ENCODE measurements at regions of chr9 and their contacts with region 1.

Region 1: DNA sequence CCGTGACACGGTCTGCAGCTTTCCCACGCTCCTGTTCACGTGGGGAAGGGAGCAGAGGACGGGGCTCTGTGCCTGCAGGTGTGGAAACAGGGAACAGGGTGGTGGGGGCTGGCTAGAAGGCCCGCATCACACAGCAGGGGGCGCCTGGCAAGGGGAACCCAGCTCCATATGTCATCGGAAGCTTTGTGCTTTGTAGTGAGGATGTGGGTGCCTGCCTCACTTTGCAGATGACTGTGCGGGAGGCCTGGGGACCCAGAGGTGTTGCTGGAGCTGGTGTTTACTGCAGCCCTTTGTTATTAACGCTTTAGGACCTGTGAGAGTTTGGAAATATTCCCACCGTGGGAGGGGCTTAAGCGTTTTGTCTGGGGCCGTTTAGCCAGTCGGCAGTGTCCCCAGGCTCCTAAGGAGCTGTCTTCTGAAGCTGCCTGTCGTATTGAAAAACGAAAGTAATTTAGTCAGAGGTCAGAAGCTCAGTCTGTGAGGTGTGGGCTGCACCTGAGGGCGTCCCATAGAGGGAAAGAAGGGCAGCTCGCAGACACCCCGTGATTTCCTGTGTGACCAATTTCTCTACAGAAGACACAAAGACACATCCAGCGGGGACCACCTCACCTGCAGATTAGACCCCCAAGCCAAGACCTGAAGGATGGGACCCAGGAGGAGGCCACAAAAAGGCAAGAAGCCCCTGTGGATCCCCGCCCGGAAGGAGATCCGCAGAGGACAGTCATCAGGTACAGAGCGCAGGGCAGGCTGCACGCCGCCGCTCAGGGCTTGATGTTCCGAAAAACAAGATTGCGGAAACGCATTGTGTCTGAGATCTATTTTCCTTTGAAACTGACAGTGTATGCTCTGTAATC is 9.1 kb downstream of the MAN1B1 start:
- DNase-seq: peak; percentile 87 to 94 (median 90)
- H3K4me3 ChIP-seq: peak overlapping the region; percentile 54 to 65
- H3K4me3 Mint-ChIP-seq: peak overlapping the region; percentile 83 to 90 (median 88)
- H3K27ac ChIP-seq: peak overlapping the region; percentile 80
- H3K27ac Mint-ChIP-seq: peak overlapping the region; percentile 88 to 97 (median 96)
- H3K4me1 ChIP-seq: peaks cover 25% of the 10 kb centered on the region
- H3K4me1 Mint-ChIP-seq: peaks cover 14 to 31% (median 18%) of the 10 kb centered on the region in 4 donors
- H3K27me3 ChIP-seq: no peaks in the 10 kb centered on the region
- H3K27me3 Mint-ChIP-seq: no peaks in the 10 kb centered on the region

Region 2: DNA sequence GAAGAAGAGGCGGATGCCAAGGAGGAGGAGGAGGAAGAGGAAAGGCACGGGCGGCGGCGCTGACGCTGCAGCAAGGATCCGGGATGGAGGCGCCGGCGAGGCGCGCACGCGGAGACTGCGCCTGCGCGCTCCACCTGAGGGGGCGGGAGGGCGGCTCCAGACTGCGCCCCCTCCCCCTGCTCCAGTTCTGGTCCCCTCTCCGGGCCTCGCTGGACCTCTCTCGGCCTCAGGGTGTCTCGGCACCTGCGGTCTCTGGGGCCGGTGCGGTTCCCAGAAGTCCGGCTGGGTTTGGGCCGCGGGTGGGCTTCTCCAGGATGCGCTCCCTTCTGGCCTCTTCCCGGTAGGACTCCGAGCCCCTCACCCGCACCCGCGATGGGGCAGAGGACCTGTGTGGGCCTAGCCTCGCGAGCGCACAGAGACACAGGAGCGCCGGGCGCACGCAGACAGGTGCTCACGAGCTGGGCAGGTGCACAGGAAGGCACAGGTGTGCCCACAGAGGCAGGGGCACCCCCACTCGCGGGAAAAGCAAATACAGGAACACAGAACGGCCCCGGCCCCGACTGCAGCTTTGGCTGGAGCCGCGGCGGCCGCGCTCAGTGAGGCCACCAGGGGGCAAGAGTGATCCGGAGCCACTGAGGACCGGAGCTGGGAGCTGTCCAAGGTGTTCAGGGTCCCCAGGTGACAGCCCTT is 49.6 kb before region 1 on chr9 and contains the start of gene NPDC1:
- CTCF ChIA-PET with region 1: interaction called, 13 read pairs
- POLR2A ChIA-PET with region 1: interaction called, 6 read pairs
- intact Hi-C with region 1: no loop called
- DNase-seq: peak; percentile 72 to 79 (median 77)
- H3K4me3 ChIP-seq: peak within 1 kb of the TSS in 1 of 2 donors; percentile 72
- H3K4me3 Mint-ChIP-seq: peak within 1 kb of the TSS; percentile 72 to 88 (median 82)
- H3K27ac ChIP-seq: no peak within 1 kb of the TSS
- H3K27ac Mint-ChIP-seq: peak within 1 kb of the TSS in 3 of 7 donors; percentile 52 to 84 (median 53)
- H3K4me1 ChIP-seq: peaks cover 37% of the 10 kb centered on the region
- H3K4me1 Mint-ChIP-seq: peaks cover 3 to 22% (median 9%) of the 10 kb centered on the region in 4 donors
- H3K27me3 ChIP-seq: peaks cover 32% of the 10 kb centered on the region
- H3K27me3 Mint-ChIP-seq: peaks cover 15 to 19% of the 10 kb centered on the region in 2 donors
- total RNA-seq, gene NPDC1: 20.7 to 21.4 TPM

Region 3: GRCh38 chr9:137064027-137064879 is 31.6 kb before region 1 on chr9:
- CTCF ChIA-PET with region 1: interaction called, 10 read pairs
- POLR2A ChIA-PET with region 1: no interaction called
- intact Hi-C with region 1: no loop called
- DNase-seq: peak in 3 of 5 donors; percentile 34 to 56 (median 40)
- H3K4me3 ChIP-seq: no peak overlapping the region
- H3K4me3 Mint-ChIP-seq: no peak overlapping the region
- H3K27ac ChIP-seq: no peak overlapping the region
- H3K27ac Mint-ChIP-seq: peak overlapping the region in 2 of 7 donors; percentile 41 to 53
- H3K4me1 ChIP-seq: peaks cover 11% of the 10 kb centered on the region
- H3K4me1 Mint-ChIP-seq: peaks cover 4 to 10% (median 7%) of the 10 kb centered on the region in 4 donors
- H3K27me3 ChIP-seq: no peaks in the 10 kb centered on the region
- H3K27me3 Mint-ChIP-seq: peaks cover 0 to 4% of the 10 kb centered on the region in 2 donors

Region 4: GRCh38 chr9:137077010-137077747 is 18.7 kb before region 1 on chr9 and contains the start of gene UAP1L1:
- CTCF ChIA-PET with region 1: interaction called, 10 read pairs
- POLR2A ChIA-PET with region 1: no interaction called
- intact Hi-C with region 1: no loop called
- DNase-seq: peak; percentile 32 to 63 (median 36)
- H3K4me3 ChIP-seq: peak within 1 kb of the TSS in 1 of 2 donors; percentile 45
- H3K4me3 Mint-ChIP-seq: peak within 1 kb of the TSS; percentile 39 to 82 (median 72)
- H3K27ac ChIP-seq: peak within 1 kb of the TSS; percentile 38
- H3K27ac Mint-ChIP-seq: peak within 1 kb of the TSS in 3 of 7 donors; percentile 24 to 63 (median 29)
- H3K4me1 ChIP-seq: peaks cover 8% of the 10 kb centered on the region
- H3K4me1 Mint-ChIP-seq: peaks cover 0 to 3% (median 1%) of the 10 kb centered on the region in 4 donors
- H3K27me3 ChIP-seq: no peaks in the 10 kb centered on the region
- H3K27me3 Mint-ChIP-seq: no peaks in the 10 kb centered on the region
- total RNA-seq, gene UAP1L1: 10.6 to 12.5 TPM

Region 5: DNA sequence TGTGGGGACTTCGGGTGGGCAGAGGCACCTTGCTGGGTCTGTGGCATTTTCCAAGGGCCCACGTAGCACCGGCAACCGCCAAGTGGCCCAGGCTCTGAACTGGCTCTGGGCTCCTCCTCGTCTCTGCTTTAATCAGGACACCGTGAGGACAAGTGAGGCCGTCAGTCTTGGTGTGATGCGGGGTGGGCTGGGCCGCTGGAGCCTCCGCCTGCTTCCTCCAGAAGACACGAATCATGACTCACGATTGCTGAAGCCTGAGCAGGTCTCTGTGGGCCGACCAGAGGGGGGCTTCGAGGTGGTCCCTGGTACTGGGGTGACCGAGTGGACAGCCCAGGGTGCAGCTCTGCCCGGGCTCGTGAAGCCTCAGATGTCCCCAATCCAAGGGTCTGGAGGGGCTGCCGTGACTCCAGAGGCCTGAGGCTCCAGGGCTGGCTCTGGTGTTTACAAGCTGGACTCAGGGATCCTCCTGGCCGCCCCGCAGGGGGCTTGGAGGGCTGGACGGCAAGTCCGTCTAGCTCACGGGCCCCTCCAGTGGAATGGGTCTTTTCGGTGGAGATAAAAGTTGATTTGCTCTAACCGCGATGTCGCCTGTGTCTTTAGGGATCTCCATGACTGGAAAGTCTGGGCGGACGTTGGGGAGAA is 12.8 kb after region 1 on chr9:
- CTCF ChIA-PET with region 1: interaction called, 13 read pairs
- POLR2A ChIA-PET with region 1: interaction called, 36 read pairs
- intact Hi-C with region 1: no loop called
- DNase-seq: no peak
- H3K4me3 ChIP-seq: no peak overlapping the region
- H3K4me3 Mint-ChIP-seq: no peak overlapping the region
- H3K27ac ChIP-seq: no peak overlapping the region
- H3K27ac Mint-ChIP-seq: no peak overlapping the region
- H3K4me1 ChIP-seq: peaks cover 7% of the 10 kb centered on the region
- H3K4me1 Mint-ChIP-seq: peaks cover 0 to 9% (median 2%) of the 10 kb centered on the region in 4 donors
- H3K27me3 ChIP-seq: no peaks in the 10 kb centered on the region
- H3K27me3 Mint-ChIP-seq: no peaks in the 10 kb centered on the region

Region 6: GRCh38 chr9:137114610-137115391 is 18.9 kb after region 1 on chr9 and contains the start of gene DPP7:
- CTCF ChIA-PET with region 1: interaction called, 13 read pairs
- POLR2A ChIA-PET with region 1: interaction called, 36 read pairs
- intact Hi-C with region 1: loop called (anchors 1 kb)
- DNase-seq: peak; percentile 79 to 83 (median 80)
- H3K4me3 ChIP-seq: peak within 1 kb of the TSS in 1 of 2 donors; percentile 43
- H3K4me3 Mint-ChIP-seq: peak within 1 kb of the TSS; percentile 39 to 78 (median 66)
- H3K27ac ChIP-seq: peak within 1 kb of the TSS; percentile 58
- H3K27ac Mint-ChIP-seq: peak within 1 kb of the TSS in 4 of 7 donors; percentile 30 to 50 (median 42)
- H3K4me1 ChIP-seq: peaks cover 16% of the 10 kb centered on the region
- H3K4me1 Mint-ChIP-seq: peaks cover 0 to 17% (median 2%) of the 10 kb centered on the region in 4 donors
- H3K27me3 ChIP-seq: no peaks in the 10 kb centered on the region
- H3K27me3 Mint-ChIP-seq: no peaks in the 10 kb centered on the region
- total RNA-seq, gene DPP7: 357 to 362 TPM

Region 7: DNA sequence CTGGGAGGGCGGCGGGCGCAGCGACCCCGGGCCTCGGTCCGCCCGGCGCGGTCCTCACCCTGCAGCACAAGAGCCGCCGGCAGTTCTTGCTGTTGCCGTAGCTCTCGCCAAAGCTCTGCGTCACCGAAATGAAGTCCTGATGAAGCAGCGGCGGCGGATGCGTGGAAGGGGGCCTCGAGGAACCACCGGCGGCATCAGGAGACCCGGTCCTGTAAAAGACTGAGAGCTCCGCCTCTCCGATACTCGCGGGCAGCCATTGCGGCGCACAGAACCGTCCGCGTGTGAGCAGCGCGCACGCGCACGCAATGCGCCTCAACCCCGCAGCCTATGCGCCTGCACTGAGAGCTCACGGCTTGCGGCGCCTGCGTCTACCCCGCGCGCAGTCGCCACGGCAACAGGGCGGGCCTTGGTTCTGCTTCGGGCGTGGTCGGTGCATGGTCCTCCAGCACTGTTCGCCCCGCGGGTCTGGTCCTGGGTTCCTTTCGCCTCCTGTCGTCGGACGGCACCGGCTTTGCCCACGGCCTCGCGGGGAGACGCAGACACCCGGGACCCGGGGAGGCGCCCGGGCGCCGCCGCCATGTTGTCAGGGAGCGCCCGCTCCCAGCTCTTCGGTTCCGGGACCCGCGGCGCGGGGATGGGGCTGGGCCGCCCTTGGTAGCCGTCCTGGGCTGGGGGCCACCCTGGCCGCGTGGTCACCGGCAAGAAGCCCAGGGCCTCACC is 33.7 kb after region 1 on chr9:
- CTCF ChIA-PET with region 1: interaction called, 5 read pairs
- POLR2A ChIA-PET with region 1: interaction called, 15 read pairs
- intact Hi-C with region 1: no loop called
- DNase-seq: peak; percentile 89 to 92 (median 91)
- H3K4me3 ChIP-seq: peak overlapping the region in 1 of 2 donors; percentile 84
- H3K4me3 Mint-ChIP-seq: peak overlapping the region; percentile 86 to 97 (median 90)
- H3K27ac ChIP-seq: peak overlapping the region; percentile 80
- H3K27ac Mint-ChIP-seq: peak overlapping the region; percentile 82 to 99 (median 92)
- H3K4me1 ChIP-seq: peaks cover 31% of the 10 kb centered on the region
- H3K4me1 Mint-ChIP-seq: peaks cover 23 to 35% (median 30%) of the 10 kb centered on the region in 4 donors
- H3K27me3 ChIP-seq: no peaks in the 10 kb centered on the region
- H3K27me3 Mint-ChIP-seq: peaks cover 2 to 4% of the 10 kb centered on the region in 2 donors

Measured in CD4-positive, alpha-beta memory T cell (primary cell).